Posterior cingulate gyrus (tissue), 11 donors: ENCODE measurements at regions of chr14 and their contacts with region 1.

Region 1: DNA sequence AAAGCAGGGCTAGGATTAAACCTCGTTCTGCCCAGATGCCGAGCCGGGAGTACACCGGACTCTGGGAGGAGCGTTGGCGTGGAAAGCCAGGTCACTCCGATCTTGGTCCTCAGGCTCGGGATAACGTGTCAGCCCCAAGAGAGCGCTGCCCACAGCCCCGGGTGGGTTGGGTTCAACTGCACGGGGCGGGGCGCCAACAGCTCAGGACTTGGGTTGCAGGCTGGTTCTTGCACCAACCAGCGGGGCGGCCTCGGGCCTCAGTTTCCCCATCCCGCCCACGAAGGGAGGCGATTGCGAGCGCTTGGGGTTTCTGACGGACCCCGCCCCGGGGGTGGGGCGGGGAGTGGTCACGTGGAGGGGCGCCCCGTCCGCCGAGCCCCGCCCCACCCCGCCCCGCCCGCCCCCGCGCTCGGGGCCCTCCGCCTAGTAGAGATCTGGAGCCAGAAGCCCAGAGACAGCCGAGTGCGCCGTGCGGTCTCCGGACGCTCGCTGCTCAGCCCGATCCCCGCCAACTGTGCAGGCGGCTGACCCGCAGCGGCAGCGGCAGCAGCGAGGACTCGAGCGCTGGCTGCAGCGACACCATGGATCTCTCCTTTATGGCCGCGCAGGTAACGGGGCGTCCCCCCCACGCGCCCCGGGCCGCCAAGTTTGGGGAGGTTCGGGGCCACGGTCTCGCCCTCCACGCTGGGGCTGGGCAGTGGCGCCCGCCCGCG is at the start of gene C14orf132:
- DNase-seq: peak; percentile 65 to 96 (median 76)

Region 2: GRCh38 chr14:96090441-96091133 is 51.5 kb after region 1 on chr14:
- intact Hi-C with region 1: loop called (anchors 5 kb)
- DNase-seq: peak; percentile 52 to 93 (median 66)